Activated T-helper 2 cell treated with anti-CD3 and anti-CD28 coated beads, Interferon-gamma antibody, Interleukin-2, Interleukin-4, amounts not matched to agents 10 μg/mL and 5 μg/mL and 100 μg/mL, durations not matched to agents 14 hours and 24 hours and 36 hours (primary cell): ENCODE measurements at regions of chr11 and their contacts with region 1.

Region 1: DNA sequence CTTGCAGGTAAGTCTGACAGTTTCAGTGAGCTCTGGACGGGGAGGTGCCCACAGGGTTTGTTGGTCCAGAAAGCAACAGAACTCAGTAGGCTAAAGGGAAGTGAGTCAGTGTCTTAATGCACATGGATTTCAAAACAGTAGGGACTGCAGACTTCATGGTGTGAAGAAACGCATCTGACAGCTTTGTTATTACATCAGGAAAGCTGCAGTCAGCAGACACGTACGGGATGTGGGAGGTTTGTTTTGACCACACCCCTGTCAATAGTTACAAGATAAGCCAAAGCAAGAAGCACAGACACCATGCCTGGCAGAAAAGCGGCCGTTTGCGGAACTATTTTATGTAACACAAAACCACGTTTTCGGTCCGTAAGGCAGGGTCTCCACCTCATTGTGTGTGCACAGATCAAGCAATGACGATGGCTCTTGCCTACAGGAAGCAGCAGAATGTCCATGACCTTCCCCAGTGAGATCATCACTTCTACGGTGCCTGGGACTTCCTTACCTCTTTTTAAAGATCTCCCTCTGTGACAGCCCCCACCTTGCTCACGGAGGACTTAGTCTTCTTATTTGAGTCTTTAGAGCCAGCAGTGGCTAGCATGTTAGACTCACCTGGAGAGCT is 58.2 kb upstream of the FTH1 start:
- DNase-seq: peak; percentile 78
- H3K4me3 Mint-ChIP-seq: peak overlapping the region; percentile 9
- H3K27ac Mint-ChIP-seq: peak overlapping the region; percentile 87
- H3K4me1 Mint-ChIP-seq: peaks cover 13% of the 10 kb centered on the region
- H3K27me3 Mint-ChIP-seq: peaks cover 7% of the 10 kb centered on the region

Region 2: DNA sequence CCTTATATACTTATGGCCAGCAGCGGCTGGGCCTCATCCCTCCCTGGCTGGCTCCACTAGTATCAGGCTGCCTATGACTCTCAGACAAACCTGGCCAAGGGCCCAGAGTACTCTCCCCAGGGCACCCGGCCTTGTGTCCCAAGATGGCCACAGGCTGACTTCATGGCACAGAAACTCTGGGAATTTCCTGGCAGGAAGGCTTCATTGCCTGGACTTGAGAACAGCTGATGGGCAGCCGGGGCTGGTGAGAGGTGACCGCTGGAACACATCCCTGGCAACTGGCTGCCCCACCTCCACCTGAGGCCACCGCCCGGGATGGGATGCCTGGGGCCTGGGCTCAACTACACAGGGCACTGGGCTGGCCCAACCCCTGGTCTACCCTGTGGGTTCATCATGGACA is 137.6 kb before region 1 on chr11:
- intact Hi-C with region 1: no loop called
- DNase-seq: no peak
- H3K4me3 Mint-ChIP-seq: no peak overlapping the region
- H3K27ac Mint-ChIP-seq: no peak overlapping the region
- H3K4me1 Mint-ChIP-seq: no peaks in the 10 kb centered on the region
- H3K27me3 Mint-ChIP-seq: no peaks in the 10 kb centered on the region

Region 3: DNA sequence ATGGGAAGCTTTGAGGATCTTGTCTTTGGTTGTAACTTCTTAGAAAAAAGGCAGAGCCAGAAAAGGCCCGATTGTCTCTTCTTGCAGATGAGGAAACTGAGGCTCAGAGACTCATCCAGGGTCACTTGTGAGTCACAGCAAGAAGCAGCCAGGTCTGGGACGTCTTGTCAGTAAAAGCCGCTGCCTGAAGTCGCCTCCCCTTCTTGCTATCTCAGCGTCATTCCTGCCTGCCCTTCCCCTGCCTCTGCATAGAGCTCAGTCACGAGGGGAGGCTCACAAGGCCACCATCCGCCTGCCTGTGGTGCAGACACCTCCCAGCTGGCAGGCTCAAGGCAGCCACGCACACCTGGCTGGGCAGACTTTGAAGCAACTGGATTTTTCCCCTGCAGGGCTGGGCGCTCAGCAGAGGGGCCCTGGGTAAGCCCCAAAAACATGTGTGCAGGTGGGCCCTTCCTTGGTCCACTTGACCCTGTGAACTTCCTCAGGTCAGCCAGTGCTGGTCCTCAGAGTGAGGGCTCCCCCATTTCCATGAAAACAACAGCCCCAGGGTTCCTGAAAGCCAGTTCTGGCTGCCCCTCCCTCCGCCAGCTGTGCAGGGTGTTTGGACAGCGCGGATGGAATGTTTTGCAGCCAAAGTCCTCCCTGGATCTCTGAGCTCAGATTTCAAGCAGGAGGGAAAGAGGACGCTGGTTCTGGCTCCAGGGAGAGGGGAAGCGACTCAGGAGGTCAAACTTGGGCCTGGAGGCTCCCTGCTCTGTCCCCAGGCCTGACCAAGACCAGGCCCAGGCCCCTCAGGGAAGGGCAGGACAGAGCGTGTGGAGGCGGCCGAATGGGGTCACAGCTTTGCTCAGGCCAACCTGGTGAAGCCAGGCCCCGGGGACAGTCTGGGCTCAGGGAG is 102.2 kb before region 1 on chr11:
- intact Hi-C with region 1: no loop called
- DNase-seq: no peak
- H3K4me3 Mint-ChIP-seq: no peak overlapping the region
- H3K27ac Mint-ChIP-seq: no peak overlapping the region
- H3K4me1 Mint-ChIP-seq: no peaks in the 10 kb centered on the region
- H3K27me3 Mint-ChIP-seq: peaks cover 28% of the 10 kb centered on the region

Region 4: DNA sequence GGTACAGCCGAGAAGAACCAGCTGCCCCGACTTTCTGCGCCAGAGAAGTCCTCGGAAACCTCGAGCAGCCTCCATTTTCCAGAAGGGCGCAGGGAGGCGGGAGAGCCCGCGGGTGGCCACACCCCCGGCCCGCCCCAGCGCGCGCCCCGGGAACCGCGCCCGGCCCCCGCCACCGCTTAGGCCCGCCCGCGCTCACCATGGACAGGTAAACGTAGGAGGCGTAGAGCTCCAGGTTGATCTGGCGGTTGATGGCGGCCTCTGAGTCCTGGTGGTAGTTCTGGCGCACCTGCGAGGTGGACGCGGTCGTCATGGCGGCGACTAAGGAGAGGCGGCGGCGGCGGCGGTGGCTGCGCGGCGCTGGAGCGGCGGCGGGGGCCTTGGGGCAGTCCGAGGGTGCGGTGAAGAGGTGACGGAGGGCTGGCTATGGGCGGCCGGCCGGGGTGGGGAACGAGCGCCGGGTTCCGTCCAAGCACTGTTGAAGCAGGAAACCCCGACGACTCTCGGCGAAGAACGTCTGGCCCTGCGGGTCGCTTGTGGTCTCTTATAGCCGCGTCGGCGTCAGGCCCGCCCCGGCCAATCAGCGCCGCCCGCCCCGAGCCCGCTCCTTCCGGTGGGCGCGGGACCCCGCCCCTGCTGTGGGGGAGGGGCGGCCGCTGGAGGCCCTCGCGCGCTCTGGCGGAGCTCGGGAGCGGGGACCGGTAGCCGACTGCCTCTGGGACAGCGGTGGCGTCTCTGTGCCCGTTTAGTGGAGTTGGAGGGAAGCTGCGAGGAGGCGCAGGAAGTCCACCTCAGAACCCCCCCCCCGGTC is 58.3 kb before region 1 on chr11 and contains the start of gene FTH1:
- intact Hi-C with region 1: loop called (anchors 1 kb)
- DNase-seq: peak; percentile 84
- H3K4me3 Mint-ChIP-seq: peak within 1 kb of the TSS; percentile 93
- H3K27ac Mint-ChIP-seq: peak within 1 kb of the TSS; percentile 90
- H3K4me1 Mint-ChIP-seq: peaks cover 59% of the 10 kb centered on the region
- H3K27me3 Mint-ChIP-seq: no peaks in the 10 kb centered on the region
- total RNA-seq, gene FTH1: 568 and 585 TPM in 2 replicates